ENCODE measurements at regions of chr3 and their contacts with region 1.

Region 1: GRCh38 chr3:79690072-79690471 is 77.7 kb downstream of the ROBO1 start:
- DNase-seq: no peak
- H3K4me3 ChIP-seq: no peak overlapping the region
- H3K27ac ChIP-seq: no peak overlapping the region
- H3K4me1 ChIP-seq: no peaks in the 10 kb centered on the region
- H3K27me3 ChIP-seq: no peaks in the 10 kb centered on the region
- CTCF ChIP-seq: no peak
- EP300 ChIP-seq: no peak
- POLR2A ChIP-seq: no peak

Region 2: GRCh38 chr3:79067734-79068133 is 622.3 kb before region 1 on chr3:
- in situ Hi-C with region 1: no loop called
- intact Hi-C with region 1: no loop called
- DNase-seq: no peak
- H3K4me3 ChIP-seq: no peak overlapping the region
- H3K27ac ChIP-seq: no peak overlapping the region
- H3K4me1 ChIP-seq: no peaks in the 10 kb centered on the region
- H3K27me3 ChIP-seq: no peaks in the 10 kb centered on the region
- CTCF ChIP-seq: no peak
- EP300 ChIP-seq: no peak
- POLR2A ChIP-seq: no peak

Region 3: GRCh38 chr3:81270603-81271371 is 1580.7 kb after region 1 on chr3:
- in situ Hi-C with region 1: no loop called
- intact Hi-C with region 1: loop called (anchors 5 kb)
- DNase-seq: no peak
- H3K4me3 ChIP-seq: no peak overlapping the region
- H3K27ac ChIP-seq: no peak overlapping the region
- H3K4me1 ChIP-seq: no peaks in the 10 kb centered on the region
- H3K27me3 ChIP-seq: no peaks in the 10 kb centered on the region
- CTCF ChIP-seq: no peak
- EP300 ChIP-seq: no peak
- POLR2A ChIP-seq: no peak